ENCODE measurements at regions of chr2 and their contacts with region 1.

Region 1: DNA sequence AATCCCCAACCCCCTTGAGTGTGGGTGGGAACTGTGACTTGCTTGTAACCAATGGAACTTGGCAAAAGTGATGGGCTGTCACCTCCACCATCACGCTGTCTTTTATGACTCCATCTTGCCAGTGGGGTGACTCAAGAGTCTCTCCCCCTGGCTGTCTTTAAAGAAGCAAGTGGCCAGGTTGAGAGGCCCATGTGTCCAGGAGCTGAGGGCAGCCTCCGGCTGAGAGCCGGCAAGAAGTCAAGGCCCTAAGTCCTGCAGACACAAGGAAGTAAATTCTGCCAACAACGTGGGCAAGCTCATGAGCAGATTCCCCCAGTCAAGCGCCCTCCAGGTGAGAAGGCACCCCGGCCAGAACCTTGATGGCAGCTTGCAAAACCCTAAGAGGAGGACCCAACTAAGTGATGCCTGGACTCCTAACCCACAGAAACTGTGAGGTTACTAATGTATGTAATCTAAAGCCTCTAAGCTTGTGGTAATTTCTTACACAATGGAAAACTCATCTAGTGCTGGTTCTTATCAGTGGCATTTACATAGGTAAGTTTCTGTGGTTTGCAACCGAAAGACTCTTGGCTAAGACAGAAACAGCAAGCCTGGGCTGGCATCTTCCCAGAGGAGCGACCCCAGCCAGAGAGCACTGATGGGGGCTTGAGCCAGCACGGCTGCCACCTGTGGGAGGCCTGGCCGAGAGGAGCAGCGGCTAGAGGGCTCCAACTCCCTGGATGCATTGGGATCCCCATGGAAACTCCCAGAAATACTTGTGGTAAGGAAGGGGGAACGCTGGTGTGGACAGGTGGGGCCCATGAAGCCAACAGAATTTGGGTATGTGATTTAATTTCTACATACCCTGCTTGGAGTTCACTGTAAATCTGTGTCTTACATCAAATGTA is 49.3 kb downstream of the CIB4 start:
- DNase-seq: no peak
- ATAC-seq: no peak
- H3K4me3 Mint-ChIP-seq: no peak overlapping the region
- H3K27ac Mint-ChIP-seq: no peak overlapping the region
- H3K4me1 Mint-ChIP-seq: peaks cover 8% of the 10 kb centered on the region
- H3K27me3 Mint-ChIP-seq: peaks cover 48% of the 10 kb centered on the region

Region 2: GRCh38 chr2:26605195-26605998 is 13.5 kb after region 1 on chr2:
- CTCF ChIA-PET with region 1: interaction called, 14 read pairs
- DNase-seq: peak; percentile 55
- ATAC-seq: peak; percentile 72
- H3K4me3 Mint-ChIP-seq: no peak overlapping the region
- H3K27ac Mint-ChIP-seq: no peak overlapping the region
- H3K4me1 Mint-ChIP-seq: no peaks in the 10 kb centered on the region
- H3K27me3 Mint-ChIP-seq: peaks cover 39% of the 10 kb centered on the region

Region 3: DNA sequence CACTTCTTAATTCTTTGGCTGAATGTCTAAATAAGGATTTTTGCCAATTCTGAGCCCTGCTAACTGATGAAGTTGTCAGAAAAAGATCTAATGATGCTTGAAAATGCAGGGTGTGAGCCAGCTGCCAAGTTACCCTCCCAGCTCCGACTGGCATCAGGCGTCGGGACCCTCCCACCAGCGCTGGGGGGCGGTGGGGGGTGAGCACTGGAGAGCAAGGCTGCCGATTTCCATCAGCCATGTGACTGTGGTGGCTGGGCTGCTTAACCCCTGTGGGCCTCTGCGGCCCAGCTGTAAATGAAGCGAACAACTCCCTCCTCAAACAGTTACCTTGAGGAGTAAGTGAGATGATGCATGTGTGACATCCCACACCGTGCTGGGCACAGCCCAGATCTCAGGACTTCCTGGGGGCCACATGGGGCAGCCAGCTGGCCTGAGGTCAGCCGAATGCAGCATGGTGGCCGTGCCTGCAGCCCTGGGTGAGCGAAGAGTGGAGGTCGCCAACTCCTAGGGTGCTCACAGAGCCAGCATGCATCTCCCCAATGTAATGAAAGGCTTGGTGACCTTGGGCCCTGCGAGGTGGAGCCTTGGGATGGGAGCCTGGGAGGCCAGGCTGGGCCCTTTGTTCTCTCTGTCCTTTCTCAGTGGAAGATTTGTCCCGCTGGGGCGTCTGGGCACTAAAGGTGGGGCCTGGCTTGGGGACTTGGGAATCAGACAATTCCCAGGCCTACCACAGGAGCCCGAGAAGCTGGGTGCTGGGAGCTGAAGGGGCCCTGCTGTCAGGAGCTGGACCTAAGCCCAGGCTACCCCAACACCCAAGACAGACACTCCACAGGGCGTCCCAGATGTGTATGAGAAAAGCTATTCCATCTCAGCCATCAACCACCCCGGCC is 24.2 kb after region 1 on chr2:
- CTCF ChIA-PET with region 1: no interaction called
- DNase-seq: no peak
- ATAC-seq: no peak
- H3K4me3 Mint-ChIP-seq: no peak overlapping the region
- H3K27ac Mint-ChIP-seq: no peak overlapping the region
- H3K4me1 Mint-ChIP-seq: peaks cover 4% of the 10 kb centered on the region
- H3K27me3 Mint-ChIP-seq: peaks cover 38% of the 10 kb centered on the region